Vagina (tissue), 2 donors: ENCODE measurements at regions of chr11 and their contacts with region 1.

Region 1: DNA sequence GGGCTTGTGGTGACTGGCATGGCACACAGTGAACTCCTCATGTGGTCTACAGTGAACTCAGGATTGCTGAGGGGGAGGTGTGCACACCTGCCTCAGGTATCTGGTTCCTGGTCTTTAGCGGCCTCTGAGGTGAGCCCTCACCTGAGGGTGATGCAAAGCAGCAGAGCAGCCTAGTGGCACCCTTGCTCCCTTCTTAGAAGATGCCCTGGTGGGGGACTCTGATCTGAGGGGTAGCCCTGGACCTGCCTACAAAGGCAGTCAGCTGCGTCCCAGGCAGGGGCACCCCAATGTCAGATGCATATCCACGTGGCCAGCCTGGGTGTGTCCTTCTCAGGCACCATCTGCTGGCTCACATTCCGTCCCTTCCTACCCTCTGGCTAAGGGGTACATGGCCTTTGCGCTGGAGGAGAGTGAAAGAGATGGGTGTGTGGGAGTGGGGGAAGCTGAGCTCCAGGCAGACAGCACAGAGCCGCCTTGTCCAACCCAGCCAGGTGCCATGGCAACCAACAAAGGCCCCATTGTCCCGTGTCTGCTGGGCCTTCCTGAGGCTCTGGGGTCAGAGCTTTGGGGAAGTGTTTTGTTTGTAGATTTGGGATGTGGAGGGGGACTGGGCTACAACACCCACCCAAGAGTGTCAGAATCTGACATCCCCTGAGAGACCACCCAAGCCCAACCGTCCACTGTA is 5.8 kb downstream of the PLEKHB1 start:
- DNase-seq: no peak
- H3K4me3 ChIP-seq: no peak overlapping the region
- H3K27ac ChIP-seq: no peak overlapping the region
- H3K4me1 ChIP-seq: peaks cover 9% of the 10 kb centered on the region
- H3K27me3 ChIP-seq: no peaks in the 10 kb centered on the region
- CTCF ChIP-seq: no peak
- POLR2A ChIP-seq: no peak

Region 2: DNA sequence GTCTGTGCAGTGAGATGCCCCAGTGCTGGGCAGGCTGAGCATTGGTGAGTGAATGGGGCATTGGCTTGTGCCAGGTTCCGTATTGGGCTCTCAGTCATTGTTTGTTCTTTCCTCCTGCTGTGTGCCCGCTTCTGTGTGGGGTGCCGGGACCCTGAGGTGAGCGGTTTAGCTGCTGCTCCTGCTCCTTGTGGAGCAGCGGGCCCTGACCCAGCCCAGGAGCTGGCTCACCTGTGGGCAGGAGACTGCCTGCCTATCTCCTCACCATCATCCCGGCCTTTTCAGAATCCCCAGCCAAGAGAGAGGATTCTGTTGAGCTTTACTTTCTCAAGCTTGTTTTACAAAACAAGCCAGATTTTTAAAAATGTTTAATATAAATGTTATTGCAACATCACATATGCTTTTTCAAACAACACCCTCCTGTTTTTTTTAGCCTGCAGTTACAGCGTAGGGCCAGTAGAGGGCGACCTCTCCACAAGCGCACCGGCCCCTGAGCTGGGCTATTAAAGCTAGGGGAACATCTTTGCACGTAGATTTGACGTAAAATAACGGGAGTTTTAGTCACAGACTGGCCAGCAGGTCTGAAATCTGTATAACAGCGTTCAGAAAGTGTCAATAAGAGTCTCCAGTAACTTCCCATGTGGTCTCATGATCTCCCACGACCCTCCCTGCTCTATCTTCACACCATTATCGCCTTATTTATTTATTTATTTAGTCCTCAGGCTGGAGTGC is 301.1 kb before region 1 on chr11:
- intact Hi-C with region 1: loop called (anchors 10 kb)
- DNase-seq: no peak
- H3K4me3 ChIP-seq: no peak overlapping the region
- H3K27ac ChIP-seq: peak overlapping the region; percentile 16
- H3K4me1 ChIP-seq: peaks cover 22% of the 10 kb centered on the region
- H3K27me3 ChIP-seq: no peaks in the 10 kb centered on the region
- CTCF ChIP-seq: peak; percentile 83 to 95 (median 87)
- POLR2A ChIP-seq: no peak